Naive thymus-derived CD4-positive, alpha-beta T cell (primary cell): ENCODE measurements at regions of chr10 and their contacts with region 1.

Region 1: GRCh38 chr10:30392564-30392990 is 41.4 kb upstream of the MAP3K8 start:
- DNase-seq: peak; percentile 45 to 80 (median 66)
- ATAC-seq: peak; percentile 99
- H3K4me3 ChIP-seq: no peak overlapping the region
- H3K4me3 Mint-ChIP-seq: peak overlapping the region in 2 of 10 donors; percentile 18 to 57
- H3K27ac ChIP-seq: no peak overlapping the region
- H3K27ac Mint-ChIP-seq: peak overlapping the region in 1 of 9 donors; percentile 47
- H3K4me1 ChIP-seq: peaks cover 0 to 5% of the 10 kb centered on the region in 2 donors
- H3K4me1 Mint-ChIP-seq: peaks cover 0 to 4% (median 3%) of the 10 kb centered on the region in 7 donors
- H3K27me3 ChIP-seq: no peaks in the 10 kb centered on the region
- H3K27me3 Mint-ChIP-seq: peaks cover 0 to 42% (median 6%) of the 10 kb centered on the region in 5 donors

Region 2: GRCh38 chr10:29585488-29585980 is 807.0 kb before region 1 on chr10:
- CTCF ChIA-PET with region 1: no interaction called
- POLR2A ChIA-PET with region 1: no interaction called
- intact Hi-C with region 1: no loop called
- DNase-seq: no peak
- ATAC-seq: no peak
- H3K4me3 ChIP-seq: no peak overlapping the region
- H3K4me3 Mint-ChIP-seq: no peak overlapping the region
- H3K27ac ChIP-seq: no peak overlapping the region
- H3K27ac Mint-ChIP-seq: peak overlapping the region in 1 of 9 donors; percentile 4
- H3K4me1 ChIP-seq: peaks cover 0 to 6% of the 10 kb centered on the region in 2 donors
- H3K4me1 Mint-ChIP-seq: peaks cover 6 to 16% (median 10%) of the 10 kb centered on the region in 7 donors
- H3K27me3 ChIP-seq: no peaks in the 10 kb centered on the region
- H3K27me3 Mint-ChIP-seq: no peaks in the 10 kb centered on the region

Region 3: GRCh38 chr10:30534465-30535144 is 142.0 kb after region 1 on chr10:
- CTCF ChIA-PET with region 1: interaction called, 38 read pairs
- POLR2A ChIA-PET with region 1: interaction called, 4 read pairs
- intact Hi-C with region 1: loop called (anchors 1 kb)
- DNase-seq: peak; percentile 36 to 79 (median 72)
- ATAC-seq: peak; percentile 69
- H3K4me3 ChIP-seq: no peak overlapping the region
- H3K4me3 Mint-ChIP-seq: no peak overlapping the region
- H3K27ac ChIP-seq: no peak overlapping the region
- H3K27ac Mint-ChIP-seq: peak overlapping the region in 2 of 9 donors; percentile 2 to 23
- H3K4me1 ChIP-seq: peaks cover 7 to 21% of the 10 kb centered on the region in 2 donors
- H3K4me1 Mint-ChIP-seq: peaks cover 8 to 39% (median 12%) of the 10 kb centered on the region in 7 donors
- H3K27me3 ChIP-seq: no peaks in the 10 kb centered on the region
- H3K27me3 Mint-ChIP-seq: peaks cover 0 to 16% (median 0%) of the 10 kb centered on the region in 5 donors

Region 4: GRCh38 chr10:30639946-30640786 is 247.6 kb after region 1 on chr10:
- CTCF ChIA-PET with region 1: interaction called, 3 read pairs
- POLR2A ChIA-PET with region 1: no interaction called
- intact Hi-C with region 1: loop called in 1 of 2 experiments (anchors 2 kb)
- DNase-seq: peak in 5 of 9 donors; percentile 14 to 43 (median 35)
- ATAC-seq: peak; percentile 34
- H3K4me3 ChIP-seq: no peak overlapping the region
- H3K4me3 Mint-ChIP-seq: no peak overlapping the region
- H3K27ac ChIP-seq: no peak overlapping the region
- H3K27ac Mint-ChIP-seq: no peak overlapping the region
- H3K4me1 ChIP-seq: no peaks in the 10 kb centered on the region
- H3K4me1 Mint-ChIP-seq: peaks cover 0 to 2% (median 0%) of the 10 kb centered on the region in 7 donors
- H3K27me3 ChIP-seq: peaks cover 3 to 7% of the 10 kb centered on the region in 2 donors
- H3K27me3 Mint-ChIP-seq: peaks cover 19 to 46% (median 41%) of the 10 kb centered on the region in 5 donors